GM10248 (cell line): ENCODE measurements at regions of chr10 and their contacts with region 1.

Region 1: DNA sequence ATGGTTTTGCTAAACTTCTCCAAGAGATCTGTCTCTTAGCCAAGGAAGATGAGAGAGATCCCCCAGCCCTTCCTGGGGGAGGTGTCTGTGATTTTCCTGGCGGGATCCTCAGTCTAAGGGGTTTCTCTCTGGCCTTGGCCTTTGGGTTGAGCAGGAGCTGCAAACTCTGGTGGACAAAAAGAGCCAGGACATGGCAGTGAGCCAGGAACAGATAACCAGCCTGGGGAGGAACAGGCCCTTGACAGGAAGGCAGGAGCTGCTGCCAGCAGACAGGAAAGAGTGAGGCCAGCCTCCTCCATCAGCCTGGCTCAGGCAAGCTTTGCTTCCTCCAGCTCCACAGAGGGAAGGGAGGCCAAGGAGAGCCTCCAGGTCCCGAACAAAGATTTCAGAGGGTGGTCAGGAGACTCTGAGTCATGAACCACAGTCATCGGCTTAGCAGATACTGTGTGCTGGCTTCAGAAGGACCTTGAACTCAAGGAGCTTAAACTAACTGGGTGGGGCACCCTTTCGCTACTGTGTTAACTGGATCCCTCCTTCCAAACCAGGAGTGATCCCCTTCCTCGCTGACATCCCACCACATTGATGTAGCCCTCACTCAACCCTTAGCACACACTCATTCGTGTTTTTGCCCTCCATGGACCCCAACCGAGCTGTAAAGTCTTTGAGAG is 34.7 kb downstream of the DDIT4 start:
- DNase-seq: no peak
- CTCF ChIP-seq: no peak

Region 2: DNA sequence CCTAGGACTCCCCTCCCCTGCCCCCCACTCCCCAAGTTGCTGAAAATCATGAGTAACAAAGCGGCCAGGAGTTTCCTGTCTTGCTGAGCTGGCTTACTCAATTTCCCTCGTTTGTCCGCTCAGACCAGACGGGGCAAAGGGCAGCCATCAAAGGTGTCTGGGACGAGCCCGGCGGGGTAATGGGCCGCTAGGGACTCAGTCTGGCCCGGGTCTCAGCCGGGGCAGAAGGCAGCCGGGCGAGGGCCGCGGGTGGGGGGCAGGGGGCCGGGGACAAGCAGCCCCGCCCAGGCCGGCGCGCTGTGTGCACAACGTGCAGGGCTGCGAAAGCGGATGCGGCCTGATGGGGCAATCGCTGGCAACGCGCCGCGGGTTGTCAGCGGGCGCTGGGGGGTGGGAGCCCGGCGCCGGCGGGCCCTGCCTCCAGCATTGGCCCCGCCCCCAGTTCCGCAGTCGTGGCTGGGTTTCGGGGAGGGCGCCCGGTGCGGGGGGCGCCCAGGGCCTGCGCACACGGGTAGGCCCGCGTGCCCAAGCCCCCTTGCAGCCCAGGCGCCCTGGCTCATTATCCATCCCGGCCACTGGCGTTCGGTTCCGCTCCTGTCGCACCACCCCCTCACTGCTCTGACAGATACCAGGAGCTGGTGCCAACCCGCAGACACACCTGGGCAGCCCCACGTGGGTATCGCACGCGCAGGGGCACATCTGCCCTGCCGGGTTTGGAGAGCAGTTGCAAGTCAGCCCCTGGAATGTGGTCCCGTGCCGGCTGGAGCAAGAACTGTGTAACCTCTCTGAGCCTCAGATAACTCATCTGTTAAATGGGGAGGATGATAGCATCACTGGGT is 11.2 kb after region 1 on chr10:
- CTCF ChIA-PET with region 1: interaction called, 9 read pairs
- POLR2A ChIA-PET with region 1: interaction called, 10 read pairs
- DNase-seq: peak; percentile 86
- CTCF ChIP-seq: no peak

Region 3: DNA sequence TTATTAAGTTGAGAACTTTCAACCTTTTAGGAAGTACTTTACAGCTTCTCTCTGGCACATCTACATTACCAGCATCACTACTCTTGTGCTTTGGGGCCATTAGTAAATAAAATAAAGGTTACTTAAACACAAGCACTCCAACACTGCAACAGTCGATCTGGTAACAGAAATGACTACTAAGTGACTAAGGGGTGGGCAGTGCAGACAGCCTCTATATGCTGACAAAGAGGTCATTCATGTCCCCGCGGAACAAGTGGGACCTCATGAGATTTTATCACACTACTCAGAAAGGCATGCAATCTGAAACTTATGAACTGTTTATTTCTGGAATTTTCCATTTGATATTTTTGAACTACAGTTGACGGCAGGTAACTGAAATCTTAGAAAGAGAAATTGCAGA is 157.6 kb after region 1 on chr10:
- CTCF ChIA-PET with region 1: no interaction called
- POLR2A ChIA-PET with region 1: no interaction called
- DNase-seq: no peak
- CTCF ChIP-seq: no peak